Activated CD4-positive, alpha-beta T cell treated with anti-CD3 and anti-CD28 coated beads, Interleukin-2, amount 10 ng/mL, durations not matched to agents 7 days and 5 days (primary cell): ENCODE measurements at regions of chr2 and their contacts with region 1.

Region 1: GRCh38 chr2:195533771-195534642 is 123.0 kb upstream of the SLC39A10 start:
- DNase-seq: peak; percentile 81
- H3K4me3 Mint-ChIP-seq: peak overlapping the region; percentile 89
- H3K27ac Mint-ChIP-seq: peak overlapping the region; percentile 100
- H3K4me1 Mint-ChIP-seq: peaks cover 91% of the 10 kb centered on the region
- H3K27me3 Mint-ChIP-seq: no peaks in the 10 kb centered on the region

Region 2: GRCh38 chr2:195468771-195469170 is 65.2 kb before region 1 on chr2:
- CTCF ChIA-PET with region 1: no interaction called
- POLR2A ChIA-PET with region 1: no interaction called
- DNase-seq: no peak
- H3K4me3 Mint-ChIP-seq: no peak overlapping the region
- H3K27ac Mint-ChIP-seq: no peak overlapping the region
- H3K4me1 Mint-ChIP-seq: peaks cover 8% of the 10 kb centered on the region
- H3K27me3 Mint-ChIP-seq: no peaks in the 10 kb centered on the region

Region 3: GRCh38 chr2:195520671-195521155 is 13.3 kb before region 1 on chr2:
- CTCF ChIA-PET with region 1: interaction called, 13 read pairs
- POLR2A ChIA-PET with region 1: no interaction called
- DNase-seq: no peak
- H3K4me3 Mint-ChIP-seq: no peak overlapping the region
- H3K27ac Mint-ChIP-seq: no peak overlapping the region
- H3K4me1 Mint-ChIP-seq: peaks cover 27% of the 10 kb centered on the region
- H3K27me3 Mint-ChIP-seq: no peaks in the 10 kb centered on the region

Region 4: DNA sequence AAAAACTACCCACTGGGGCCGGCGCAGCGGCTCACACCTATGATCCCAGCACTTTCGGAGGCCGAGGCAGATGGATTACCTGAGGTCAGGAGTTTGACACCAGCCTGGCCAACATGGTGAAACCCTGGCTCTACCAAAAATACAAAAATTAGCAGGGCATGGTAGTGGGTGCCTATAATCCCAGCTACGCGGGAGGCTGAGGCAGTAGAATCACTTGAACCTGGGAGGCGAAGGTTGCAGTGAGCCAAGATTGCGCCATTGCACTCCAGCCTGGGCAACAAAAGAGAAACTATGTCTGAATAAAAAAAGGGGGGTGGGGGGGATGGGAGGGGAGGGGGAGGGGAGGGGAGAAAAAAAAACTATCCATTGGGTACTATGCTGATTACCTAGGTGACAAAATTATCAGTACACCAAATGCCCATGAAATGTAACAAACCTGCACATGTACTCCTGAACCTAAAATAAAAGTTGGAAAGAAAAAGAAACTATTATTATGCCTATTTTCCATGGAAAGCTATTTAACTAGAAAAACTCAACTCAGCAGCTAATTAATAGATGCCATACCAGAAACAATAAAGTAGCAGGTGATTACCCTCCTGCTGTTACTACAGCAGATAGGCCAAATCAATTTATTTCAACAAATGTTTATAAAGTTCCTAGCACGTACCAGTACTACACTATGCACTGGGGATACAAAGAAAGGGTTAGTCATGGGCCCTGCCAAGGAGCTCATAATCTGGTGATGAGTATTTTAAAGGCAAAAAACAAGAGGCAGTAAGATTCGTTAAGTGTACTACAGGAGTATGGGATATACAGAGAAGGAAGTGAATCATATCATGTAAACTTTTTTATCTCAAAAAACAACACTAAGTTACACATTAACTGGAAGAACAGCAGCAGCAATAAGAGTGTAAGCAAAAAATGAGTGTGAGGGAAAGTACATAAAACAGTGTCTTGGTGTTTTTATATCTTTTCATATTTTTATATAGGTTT is 10.2 kb after region 1 on chr2:
- CTCF ChIA-PET with region 1: interaction called, 56 read pairs
- POLR2A ChIA-PET with region 1: interaction called, 8 read pairs
- DNase-seq: no peak
- H3K4me3 Mint-ChIP-seq: peak overlapping the region; percentile 36
- H3K27ac Mint-ChIP-seq: peak overlapping the region; percentile 88
- H3K4me1 Mint-ChIP-seq: peaks cover 75% of the 10 kb centered on the region
- H3K27me3 Mint-ChIP-seq: no peaks in the 10 kb centered on the region

Region 5: GRCh38 chr2:195656859-195657633 is 123.0 kb after region 1 on chr2 and contains the start of gene SLC39A10:
- CTCF ChIA-PET with region 1: interaction called, 16 read pairs
- POLR2A ChIA-PET with region 1: interaction called, 10 read pairs
- DNase-seq: peak; percentile 97
- H3K4me3 Mint-ChIP-seq: peak within 1 kb of the TSS; percentile 97
- H3K27ac Mint-ChIP-seq: peak within 1 kb of the TSS; percentile 99
- H3K4me1 Mint-ChIP-seq: peaks cover 23% of the 10 kb centered on the region
- H3K27me3 Mint-ChIP-seq: peaks cover 2% of the 10 kb centered on the region
- total RNA-seq, gene SLC39A10: 46.9 to 55.6 TPM

Region 6: DNA sequence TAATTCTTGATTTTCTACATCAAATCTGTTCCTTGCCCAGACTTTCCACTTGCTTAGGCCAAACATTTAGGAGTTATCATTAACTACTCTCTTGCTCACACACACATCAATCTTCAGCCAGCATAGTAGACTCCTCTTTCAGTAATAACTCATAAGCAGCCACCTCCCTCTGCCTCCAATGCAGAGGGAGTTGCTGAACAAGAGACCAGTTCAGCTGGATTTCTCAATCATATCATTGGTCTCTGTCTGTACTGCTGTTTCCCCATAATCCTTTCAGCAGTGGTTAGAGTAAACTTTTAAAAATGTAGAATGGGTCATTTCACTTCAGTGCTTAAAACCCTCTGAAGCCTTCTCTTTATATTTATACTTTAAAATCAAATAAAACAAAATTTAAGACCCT is 236.0 kb after region 1 on chr2:
- CTCF ChIA-PET with region 1: no interaction called
- POLR2A ChIA-PET with region 1: no interaction called
- DNase-seq: no peak
- H3K4me3 Mint-ChIP-seq: no peak overlapping the region
- H3K27ac Mint-ChIP-seq: no peak overlapping the region
- H3K4me1 Mint-ChIP-seq: no peaks in the 10 kb centered on the region
- H3K27me3 Mint-ChIP-seq: peaks cover 2% of the 10 kb centered on the region

Region 7: GRCh38 chr2:196068271-196069209 is 534.5 kb after region 1 on chr2 and contains the start of gene DNAH7:
- CTCF ChIA-PET with region 1: no interaction called
- POLR2A ChIA-PET with region 1: no interaction called
- DNase-seq: peak; percentile 93
- H3K4me3 Mint-ChIP-seq: peak within 1 kb of the TSS; percentile 76
- H3K27ac Mint-ChIP-seq: peak within 1 kb of the TSS; percentile 63
- H3K4me1 Mint-ChIP-seq: peaks cover 10% of the 10 kb centered on the region
- H3K27me3 Mint-ChIP-seq: peaks cover 22% of the 10 kb centered on the region
- total RNA-seq, gene DNAH7: 0.04 TPM in 1 of 2 experiments, not detected in the other